Heart left ventricle (tissue), 16 donors: ENCODE measurements at regions of chr4 and their contacts with region 1.

Region 1: GRCh38 chr4:183098723-183099536 is at the start of gene WWC2:
- DNase-seq: peak; percentile 91 to 96 (median 93)
- ATAC-seq: peak; percentile 85 to 94 (median 93)
- H3K4me3 ChIP-seq: peak within 1 kb of the TSS; percentile 52 to 92 (median 81)
- H3K27ac ChIP-seq: peak within 1 kb of the TSS; percentile 91 to 99 (median 97)
- H3K4me1 ChIP-seq: peaks cover 0 to 36% (median 18%) of the 10 kb centered on the region in 12 donors
- H3K27me3 ChIP-seq: peaks cover 0 to 18% (median 0%) of the 10 kb centered on the region in 9 donors
- CTCF ChIP-seq: peak in 4 of 12 donors; percentile 21 to 27 (median 24)
- POLR2A ChIP-seq: peak; percentile 23 to 77
- total RNA-seq, gene WWC2: 21.4 to 43.0 (median 36.5) TPM

Region 2: DNA sequence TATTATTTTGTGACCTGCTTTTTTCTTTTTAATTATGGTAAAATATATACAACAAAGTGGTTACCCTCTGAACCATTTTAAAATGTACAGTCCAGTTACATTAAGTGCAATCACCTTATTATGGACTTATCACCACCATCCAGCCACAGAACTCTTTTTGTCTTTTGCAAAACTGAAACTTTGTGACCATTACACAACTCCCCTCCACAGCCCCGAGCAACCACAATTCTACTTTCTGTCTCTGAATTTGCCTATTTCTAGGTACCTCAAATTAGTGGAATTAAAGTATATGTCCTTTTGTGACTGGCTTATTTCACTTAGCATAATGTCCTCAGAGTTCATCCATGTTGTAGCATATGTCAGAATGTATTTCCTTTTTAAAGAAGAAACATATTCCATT is 39.1 kb before region 1 on chr4:
- intact Hi-C with region 1: no loop called
- DNase-seq: no peak
- ATAC-seq: no peak
- H3K4me3 ChIP-seq: no peak overlapping the region
- H3K27ac ChIP-seq: no peak overlapping the region
- H3K4me1 ChIP-seq: peaks cover 0 to 7% (median 0%) of the 10 kb centered on the region in 12 donors
- H3K27me3 ChIP-seq: no peaks in the 10 kb centered on the region
- CTCF ChIP-seq: no peak
- POLR2A ChIP-seq: no peak

Region 3: DNA sequence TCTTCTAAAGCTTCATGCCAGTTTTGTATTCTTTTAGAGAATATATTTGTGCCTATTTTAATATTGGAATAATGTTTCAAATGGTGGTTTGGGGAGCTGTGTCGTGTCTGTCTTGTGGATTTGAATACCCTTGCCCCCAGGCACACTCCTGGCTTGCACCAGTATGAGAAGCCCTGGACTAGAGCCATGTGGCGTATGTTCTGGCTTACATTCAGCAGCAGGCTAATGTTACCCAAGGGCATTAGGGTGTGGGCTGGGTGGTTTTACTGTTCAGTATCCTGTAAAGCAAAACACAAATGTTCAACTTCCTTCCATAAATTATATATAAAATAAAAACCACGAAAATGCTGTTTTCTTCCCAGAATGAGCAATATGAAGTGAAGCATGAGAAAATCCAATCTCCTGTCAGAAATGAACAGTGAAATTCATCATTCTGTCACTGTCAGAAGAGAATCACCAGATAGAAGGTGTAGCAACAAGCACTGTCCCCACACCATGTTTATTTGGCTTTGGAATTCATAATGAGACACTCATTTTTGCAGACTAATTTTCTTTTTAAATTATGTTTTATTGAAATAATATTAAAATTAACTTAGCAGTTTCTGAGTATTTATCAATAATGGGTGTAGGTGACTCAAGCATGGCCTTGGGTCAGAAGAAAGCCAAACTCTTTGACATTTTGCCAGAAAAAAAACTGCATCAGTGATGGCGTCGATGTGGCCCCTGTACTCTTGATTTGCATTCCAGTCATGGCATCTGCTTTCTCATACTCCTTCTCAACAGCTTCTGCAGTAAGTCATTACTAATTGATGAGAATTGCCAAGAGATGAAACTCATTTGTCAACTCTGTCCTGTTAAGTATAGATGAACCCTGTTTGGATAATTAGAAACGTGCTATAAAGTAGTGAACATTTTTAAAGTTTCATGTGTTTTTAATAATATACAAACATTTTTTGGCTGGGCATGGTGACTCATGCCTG is 43.9 kb after region 1 on chr4:
- intact Hi-C with region 1: loop called in 3 of 10 experiments (anchors 5 kb)
- DNase-seq: peak in 4 of 5 donors; percentile 73 to 82 (median 82)
- ATAC-seq: peak; percentile 88 to 92 (median 92)
- H3K4me3 ChIP-seq: peak overlapping the region in 3 of 12 donors; percentile 1 to 4 (median 3)
- H3K27ac ChIP-seq: peak overlapping the region in 8 of 12 donors; percentile 7 to 59 (median 36)
- H3K4me1 ChIP-seq: peaks cover 6 to 79% (median 52%) of the 10 kb centered on the region in 12 donors
- H3K27me3 ChIP-seq: no peaks in the 10 kb centered on the region
- CTCF ChIP-seq: no peak
- POLR2A ChIP-seq: no peak

Region 4: DNA sequence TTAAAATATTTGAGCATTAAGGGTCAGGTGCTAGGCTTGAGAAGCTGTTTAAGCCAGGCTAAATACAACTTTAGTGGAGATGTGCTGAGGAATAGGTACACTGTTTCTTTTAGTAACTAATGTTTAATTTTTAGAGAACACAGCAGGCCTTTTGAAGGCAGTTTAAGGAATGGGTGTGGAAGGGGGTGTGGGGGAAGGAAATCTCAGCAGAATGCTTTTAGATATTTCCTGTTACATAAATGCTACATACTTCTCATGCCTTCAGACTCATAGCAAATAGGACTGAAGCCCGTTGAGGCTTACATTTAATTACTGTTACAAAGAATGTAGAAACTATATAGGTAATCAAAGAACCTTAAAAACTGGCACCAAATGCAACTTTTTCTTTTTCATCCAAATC is 66.4 kb after region 1 on chr4:
- intact Hi-C with region 1: loop called in 1 of 10 experiments (anchors 10 kb)
- DNase-seq: no peak
- ATAC-seq: peak in 3 of 4 donors; percentile 43 to 68 (median 46)
- H3K4me3 ChIP-seq: no peak overlapping the region
- H3K27ac ChIP-seq: peak overlapping the region in 11 of 12 donors; percentile 21 to 70 (median 60)
- H3K4me1 ChIP-seq: peaks cover 0 to 57% (median 22%) of the 10 kb centered on the region in 12 donors
- H3K27me3 ChIP-seq: no peaks in the 10 kb centered on the region
- CTCF ChIP-seq: no peak
- POLR2A ChIP-seq: no peak

Region 5: GRCh38 chr4:183241322-183241640 is 142.4 kb after region 1 on chr4:
- intact Hi-C with region 1: loop called in 3 of 10 experiments (anchors 5 kb)
- DNase-seq: no peak
- ATAC-seq: peak; percentile 57 to 77 (median 66)
- H3K4me3 ChIP-seq: no peak overlapping the region
- H3K27ac ChIP-seq: no peak overlapping the region
- H3K4me1 ChIP-seq: peaks cover 0 to 29% (median 11%) of the 10 kb centered on the region in 12 donors
- H3K27me3 ChIP-seq: no peaks in the 10 kb centered on the region
- CTCF ChIP-seq: no peak
- POLR2A ChIP-seq: no peak

Region 6: GRCh38 chr4:183249857-183250256 is 150.9 kb after region 1 on chr4:
- intact Hi-C with region 1: loop called in 1 of 10 experiments (anchors 5 kb)
- DNase-seq: no peak
- ATAC-seq: peak in 3 of 4 donors; percentile 67 to 73 (median 67)
- H3K4me3 ChIP-seq: no peak overlapping the region
- H3K27ac ChIP-seq: no peak overlapping the region
- H3K4me1 ChIP-seq: no peaks in the 10 kb centered on the region
- H3K27me3 ChIP-seq: no peaks in the 10 kb centered on the region
- CTCF ChIP-seq: peak in 10 of 12 donors; percentile 7 to 58 (median 44)
- POLR2A ChIP-seq: no peak